ENCODE measurements at regions of chr17 and their contacts with region 1.

Region 1: DNA sequence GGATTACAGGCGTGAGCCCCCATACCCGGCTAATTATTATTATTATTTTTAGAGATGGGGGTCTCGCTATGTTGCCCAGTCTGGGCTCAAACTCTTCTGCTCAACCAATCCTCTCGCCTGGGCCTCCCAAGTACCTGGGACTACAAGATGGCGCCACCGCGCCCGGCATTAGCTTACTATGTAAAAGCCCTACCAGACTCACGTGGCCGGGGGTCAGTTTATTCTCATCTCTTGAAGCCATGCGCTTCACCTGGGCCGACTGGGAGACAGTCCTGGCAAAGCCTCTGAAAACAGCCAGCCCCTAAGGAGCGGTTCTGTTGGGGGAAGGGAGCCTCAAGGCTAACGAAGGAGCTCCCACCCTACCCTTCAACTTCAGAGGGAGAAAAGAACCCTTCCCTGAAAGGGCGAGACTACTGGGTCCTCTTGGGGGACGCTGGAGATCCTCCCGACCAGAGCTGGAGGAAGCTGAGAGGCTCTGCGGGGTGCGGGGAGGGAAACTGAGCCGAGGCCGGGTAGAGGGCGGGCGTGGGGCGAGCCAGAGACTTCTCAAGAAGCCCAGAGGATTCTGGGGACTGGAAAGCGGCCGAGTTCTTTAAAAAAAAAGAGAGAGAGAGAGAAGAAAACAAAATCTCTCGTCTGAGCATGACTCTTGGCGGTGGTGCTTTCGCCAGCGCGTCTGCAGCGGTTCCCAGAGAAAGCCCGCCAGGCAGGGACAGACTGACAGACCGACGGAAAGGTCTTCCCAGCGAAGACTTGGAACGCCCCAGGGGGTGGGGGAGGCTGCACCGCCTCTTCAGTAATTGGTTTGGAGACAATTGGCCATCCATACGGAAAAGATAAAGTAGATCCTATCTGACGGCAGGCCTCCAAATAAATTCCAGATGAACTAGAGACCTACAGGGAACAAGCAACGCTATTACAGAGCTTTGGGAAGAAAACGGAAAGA is 5.6 kb upstream of the TUBG2 start:
- DNase-seq: peak; percentile 75 to 91 (median 91)
- ATAC-seq: peak; percentile 88
- H3K4me3 ChIP-seq: peak overlapping the region; percentile 54
- H3K27ac ChIP-seq: peak overlapping the region; percentile 61
- H3K4me1 ChIP-seq: no peaks in the 10 kb centered on the region
- H3K27me3 ChIP-seq: no peaks in the 10 kb centered on the region

Region 2: GRCh38 chr17:42536048-42536371 is 117.4 kb before region 1 on chr17 and contains the start of gene NAGLU:
- intact Hi-C with region 1: no loop called
- DNase-seq: peak; percentile 98 to 99 (median 99)
- ATAC-seq: peak; percentile 90 to 93
- H3K4me3 ChIP-seq: peak within 1 kb of the TSS; percentile 88
- H3K27ac ChIP-seq: peak within 1 kb of the TSS; percentile 92
- H3K4me1 ChIP-seq: peaks cover 7% of the 10 kb centered on the region
- H3K27me3 ChIP-seq: no peaks in the 10 kb centered on the region
- total RNA-seq, gene NAGLU: 11.3 to 18.8 (median 15.0) TPM

Region 3: GRCh38 chr17:42618442-42619150 is 34.9 kb before region 1 on chr17:
- intact Hi-C with region 1: loop called in 1 of 4 experiments (anchors 5 kb)
- DNase-seq: peak; percentile 22 to 74 (median 60)
- ATAC-seq: peak; percentile 69 to 88
- H3K4me3 ChIP-seq: no peak overlapping the region
- H3K27ac ChIP-seq: peak overlapping the region; percentile 38
- H3K4me1 ChIP-seq: peaks cover 5% of the 10 kb centered on the region
- H3K27me3 ChIP-seq: no peaks in the 10 kb centered on the region